PC-9 (cell line): ENCODE measurements at regions of chr4 and their contacts with region 1.

Region 1: GRCh38 chr4:15149839-15150476 is 147.7 kb downstream of the CPEB2 start:
- DNase-seq: peak; percentile 73 to 90
- H3K4me3 ChIP-seq: no peak overlapping the region
- H3K27ac ChIP-seq: peak overlapping the region; percentile 80
- H3K4me1 ChIP-seq: peaks cover 24% of the 10 kb centered on the region
- H3K27me3 ChIP-seq: no peaks in the 10 kb centered on the region
- CTCF ChIP-seq: no peak

Region 2: GRCh38 chr4:14726441-14727405 is 423.2 kb before region 1 on chr4:
- CTCF ChIA-PET with region 1: no interaction called
- POLR2A ChIA-PET with region 1: no interaction called
- intact Hi-C with region 1: loop called (anchors 5 kb)
- DNase-seq: peak; percentile 70 to 89
- H3K4me3 ChIP-seq: peak overlapping the region; percentile 4; the same call in 1 of the 2 replicates
- H3K27ac ChIP-seq: peak overlapping the region; percentile 61
- H3K4me1 ChIP-seq: peaks cover 18% of the 10 kb centered on the region
- H3K27me3 ChIP-seq: no peaks in the 10 kb centered on the region
- CTCF ChIP-seq: no peak

Region 3: DNA sequence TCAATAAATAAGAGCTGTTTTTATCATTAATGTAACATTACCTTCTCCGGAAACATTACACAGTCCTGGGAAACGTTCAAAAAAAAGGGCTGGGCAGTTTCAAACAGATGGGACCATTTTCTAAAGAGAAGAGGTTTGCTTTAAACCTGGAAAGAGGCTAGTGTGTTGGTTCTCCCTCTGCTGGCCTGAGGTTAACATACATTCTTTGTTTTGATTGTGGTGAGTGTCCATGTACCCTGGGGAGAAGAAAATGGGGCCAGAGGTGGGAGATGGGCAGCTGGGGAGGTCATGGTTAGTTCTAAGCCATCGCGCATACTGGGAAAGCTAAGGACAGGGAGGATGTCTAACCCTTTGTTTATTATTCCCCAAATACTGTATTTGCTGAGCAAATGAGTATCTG is 47.0 kb after region 1 on chr4:
- CTCF ChIA-PET with region 1: no interaction called
- POLR2A ChIA-PET with region 1: no interaction called
- intact Hi-C with region 1: no loop called
- DNase-seq: peak in 1 of 2 experiments; percentile 8
- H3K4me3 ChIP-seq: no peak overlapping the region
- H3K27ac ChIP-seq: no peak overlapping the region
- H3K4me1 ChIP-seq: no peaks in the 10 kb centered on the region
- H3K27me3 ChIP-seq: no peaks in the 10 kb centered on the region
- CTCF ChIP-seq: peak; percentile 45